ENCODE measurements at regions of chr1 and their contacts with region 1.

Region 1: GRCh38 chr1:211514030-211514754 is 22.2 kb upstream of the RD3 start:
- DNase-seq: peak; percentile 82
- H3K4me3 ChIP-seq: no peak overlapping the region
- H3K27ac ChIP-seq: no peak overlapping the region
- H3K4me1 ChIP-seq: peaks cover 10% of the 10 kb centered on the region
- H3K27me3 ChIP-seq: no peaks in the 10 kb centered on the region
- CTCF ChIP-seq: peak; percentile 78 to 85
- POLR2A ChIP-seq: no peak

Region 2: GRCh38 chr1:210407207-210407886 is 1106.8 kb before region 1 on chr1:
- CTCF ChIA-PET with region 1: interaction called, 4 read pairs
- POLR2A ChIA-PET with region 1: no interaction called
- dilution Hi-C with region 1: no loop called
- intact Hi-C with region 1: loop called (anchors 1 kb)
- DNase-seq: peak; percentile 61
- H3K4me3 ChIP-seq: no peak overlapping the region
- H3K27ac ChIP-seq: no peak overlapping the region
- H3K4me1 ChIP-seq: no peaks in the 10 kb centered on the region
- H3K27me3 ChIP-seq: peaks cover 3 to 11% of the 10 kb centered on the region in 2 experiments
- CTCF ChIP-seq: peak; percentile 83 to 95
- POLR2A ChIP-seq: no peak

Region 3: DNA sequence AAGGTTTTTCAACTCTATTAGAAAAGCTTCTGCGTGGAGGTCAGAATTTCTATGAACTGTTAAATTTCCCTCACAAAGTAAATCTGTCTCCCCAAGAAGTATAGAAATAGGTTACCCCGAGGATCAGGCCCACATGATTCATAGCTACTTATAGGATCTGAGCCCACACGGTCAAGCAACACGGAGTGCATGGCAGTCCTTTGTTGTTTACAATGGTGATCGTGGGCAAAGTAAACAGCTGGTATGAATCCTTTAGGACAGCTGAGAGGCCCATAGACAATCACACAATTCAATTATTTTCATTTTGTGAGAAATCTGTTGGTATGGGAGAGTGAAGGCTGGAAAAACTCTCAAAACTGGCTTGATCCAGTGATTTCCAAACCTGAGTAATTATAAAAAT is 313.9 kb before region 1 on chr1:
- CTCF ChIA-PET with region 1: no interaction called
- POLR2A ChIA-PET with region 1: no interaction called
- dilution Hi-C with region 1: no loop called
- intact Hi-C with region 1: no loop called
- DNase-seq: no peak
- H3K4me3 ChIP-seq: no peak overlapping the region
- H3K27ac ChIP-seq: no peak overlapping the region
- H3K4me1 ChIP-seq: no peaks in the 10 kb centered on the region
- H3K27me3 ChIP-seq: no peaks in the 10 kb centered on the region
- CTCF ChIP-seq: no peak
- POLR2A ChIP-seq: no peak

Region 4: GRCh38 chr1:211258756-211259637 is 255.2 kb before region 1 on chr1 and contains the start of gene RCOR3:
- CTCF ChIA-PET with region 1: interaction called, 4 read pairs
- POLR2A ChIA-PET with region 1: no interaction called
- dilution Hi-C with region 1: no loop called
- intact Hi-C with region 1: loop called (anchors 1 kb)
- DNase-seq: peak; percentile 80
- H3K4me3 ChIP-seq: peak within 1 kb of the TSS; percentile 84 to 95 (median 86)
- H3K27ac ChIP-seq: peak within 1 kb of the TSS; percentile 85
- H3K4me1 ChIP-seq: peaks cover 13% of the 10 kb centered on the region
- H3K27me3 ChIP-seq: no peaks in the 10 kb centered on the region
- CTCF ChIP-seq: peak; percentile 50 to 74
- POLR2A ChIP-seq: peak; percentile 14
- total RNA-seq, gene RCOR3: 34.0 and 35.7 TPM in 2 replicates

Region 5: GRCh38 chr1:211345719-211346118 is 168.5 kb before region 1 on chr1:
- CTCF ChIA-PET with region 1: no interaction called
- POLR2A ChIA-PET with region 1: no interaction called
- dilution Hi-C with region 1: no loop called
- intact Hi-C with region 1: no loop called
- DNase-seq: no peak
- H3K4me3 ChIP-seq: no peak overlapping the region
- H3K27ac ChIP-seq: no peak overlapping the region
- H3K4me1 ChIP-seq: no peaks in the 10 kb centered on the region
- H3K27me3 ChIP-seq: no peaks in the 10 kb centered on the region
- CTCF ChIP-seq: no peak
- POLR2A ChIP-seq: no peak

Region 6: DNA sequence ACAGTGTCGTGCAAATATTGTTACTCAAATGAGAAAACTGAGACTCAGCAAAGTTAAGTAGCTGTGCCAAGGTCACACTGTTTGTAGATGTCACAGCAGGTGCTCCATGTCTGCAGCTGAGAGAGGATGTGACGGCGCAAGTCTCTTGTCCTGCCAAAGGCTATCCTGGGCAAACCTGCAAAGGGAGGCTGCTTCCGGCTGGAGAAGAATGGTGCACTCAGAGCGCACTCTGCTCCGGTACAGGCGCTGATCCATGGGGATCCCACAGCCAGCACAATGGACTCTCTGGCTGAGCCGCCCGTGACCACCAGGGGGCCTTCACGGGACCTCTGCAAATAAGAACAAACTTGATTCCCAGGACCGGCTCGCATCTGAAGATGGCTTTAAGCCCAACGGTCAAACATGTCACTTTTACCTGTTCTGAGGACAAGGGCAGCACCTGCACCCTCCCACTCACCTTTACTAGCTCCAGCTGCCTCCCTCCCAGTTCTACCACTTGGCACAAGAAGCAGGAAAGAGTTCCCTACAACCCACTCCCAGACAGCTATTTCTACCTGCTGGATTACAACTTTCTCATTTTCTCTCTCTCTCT is 44.2 kb before region 1 on chr1:
- CTCF ChIA-PET with region 1: interaction called, 77 read pairs
- POLR2A ChIA-PET with region 1: no interaction called
- dilution Hi-C with region 1: no loop called
- intact Hi-C with region 1: loop called (anchors 1 kb)
- DNase-seq: peak; percentile 80
- H3K4me3 ChIP-seq: no peak overlapping the region
- H3K27ac ChIP-seq: no peak overlapping the region
- H3K4me1 ChIP-seq: peaks cover 20% of the 10 kb centered on the region
- H3K27me3 ChIP-seq: peaks cover 0 to 7% of the 10 kb centered on the region in 2 experiments
- CTCF ChIP-seq: peak; percentile 92 to 96
- POLR2A ChIP-seq: no peak

Region 7: GRCh38 chr1:211551628-211552460 is 37.7 kb after region 1 on chr1:
- CTCF ChIA-PET with region 1: interaction called, 18 read pairs
- POLR2A ChIA-PET with region 1: no interaction called
- dilution Hi-C with region 1: no loop called
- intact Hi-C with region 1: loop called (anchors 1 kb)
- DNase-seq: peak; percentile 78
- H3K4me3 ChIP-seq: no peak overlapping the region
- H3K27ac ChIP-seq: peak overlapping the region; percentile 84
- H3K4me1 ChIP-seq: peaks cover 18% of the 10 kb centered on the region
- H3K27me3 ChIP-seq: no peaks in the 10 kb centered on the region
- CTCF ChIP-seq: no peak
- POLR2A ChIP-seq: peak; percentile 49

Region 8: GRCh38 chr1:211648980-211649934 is 135.1 kb after region 1 on chr1:
- CTCF ChIA-PET with region 1: interaction called, 84 read pairs
- POLR2A ChIA-PET with region 1: no interaction called
- dilution Hi-C with region 1: no loop called
- intact Hi-C with region 1: no loop called
- DNase-seq: no peak
- H3K4me3 ChIP-seq: no peak overlapping the region
- H3K27ac ChIP-seq: no peak overlapping the region
- H3K4me1 ChIP-seq: peaks cover 35% of the 10 kb centered on the region
- H3K27me3 ChIP-seq: no peaks in the 10 kb centered on the region
- CTCF ChIP-seq: peak in 1 of 2 donors; percentile 11
- POLR2A ChIP-seq: no peak